ENCODE measurements at regions of chr2 and their contacts with region 1.

Region 1: DNA sequence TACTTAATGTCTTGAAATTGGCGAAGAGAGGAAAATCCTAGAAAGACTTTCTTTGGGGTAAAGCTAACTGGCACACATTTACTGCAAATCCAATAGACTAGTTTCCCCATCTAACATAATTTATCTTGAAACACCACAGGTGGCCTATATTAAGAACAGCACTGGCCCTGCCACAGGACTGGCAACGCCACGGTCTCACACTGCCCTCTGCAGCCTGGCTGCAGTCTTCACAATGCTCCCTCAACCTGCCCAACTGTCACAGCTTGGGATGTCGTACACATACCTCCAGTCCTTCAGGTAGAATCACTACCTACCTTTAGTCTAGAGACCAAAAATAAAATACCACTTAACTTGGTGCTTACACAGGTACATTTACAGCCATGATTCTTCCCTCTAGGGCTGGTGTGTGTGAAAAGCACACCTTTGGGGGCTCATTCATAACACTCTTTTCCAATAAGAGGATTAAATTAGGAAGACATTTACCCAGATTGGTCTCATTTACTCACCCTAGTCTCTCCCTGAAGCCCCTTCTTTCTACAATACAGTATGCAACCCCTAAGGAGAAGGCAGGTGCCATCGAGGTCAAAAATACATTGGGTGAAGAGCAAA is 222.2 kb downstream of the C1D start:
- DNase-seq: peak; percentile 73
- H3K4me3 Mint-ChIP-seq: no peak overlapping the region
- H3K27ac Mint-ChIP-seq: no peak overlapping the region
- H3K4me1 Mint-ChIP-seq: peaks cover 7% of the 10 kb centered on the region
- H3K27me3 Mint-ChIP-seq: no peaks in the 10 kb centered on the region
- CTCF ChIP-seq: peak; percentile 90

Region 2: DNA sequence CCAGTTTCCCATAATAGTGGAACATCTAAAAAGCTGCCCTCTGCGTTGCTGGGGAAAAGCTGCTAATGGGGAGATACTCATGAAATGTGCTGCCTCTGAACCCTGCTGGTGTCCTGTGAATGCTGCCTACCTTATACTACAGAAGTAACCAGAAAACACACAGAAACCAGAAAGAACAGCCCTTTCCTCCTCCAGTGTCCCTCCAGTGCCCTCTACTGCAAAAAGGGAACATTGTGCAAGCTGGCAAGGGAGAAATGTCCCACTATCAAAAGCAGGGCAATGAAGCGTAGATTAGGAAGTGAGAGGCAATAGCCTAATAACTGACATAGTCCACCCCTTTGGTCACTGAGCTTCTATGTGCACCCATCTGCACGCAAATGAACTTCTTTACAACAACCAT is 606.1 kb before region 1 on chr2:
- CTCF ChIA-PET with region 1: interaction called, 6 read pairs
- POLR2A ChIA-PET with region 1: no interaction called
- intact Hi-C with region 1: loop called (anchors 5 kb)
- DNase-seq: peak; percentile 16
- H3K4me3 Mint-ChIP-seq: no peak overlapping the region
- H3K27ac Mint-ChIP-seq: no peak overlapping the region
- H3K4me1 Mint-ChIP-seq: no peaks in the 10 kb centered on the region
- H3K27me3 Mint-ChIP-seq: no peaks in the 10 kb centered on the region
- CTCF ChIP-seq: peak; percentile 38

Region 3: GRCh38 chr2:67322353-67323001 is 518.1 kb before region 1 on chr2:
- CTCF ChIA-PET with region 1: interaction called, 4 read pairs
- POLR2A ChIA-PET with region 1: no interaction called
- intact Hi-C with region 1: loop called (anchors 5 kb)
- DNase-seq: peak; percentile 76
- H3K4me3 Mint-ChIP-seq: no peak overlapping the region
- H3K27ac Mint-ChIP-seq: peak overlapping the region; percentile 57
- H3K4me1 Mint-ChIP-seq: peaks cover 6% of the 10 kb centered on the region
- H3K27me3 Mint-ChIP-seq: no peaks in the 10 kb centered on the region
- CTCF ChIP-seq: peak; percentile 44

Region 4: GRCh38 chr2:67733517-67733916 is 107.0 kb before region 1 on chr2:
- CTCF ChIA-PET with region 1: interaction called, 53 read pairs
- POLR2A ChIA-PET with region 1: no interaction called
- intact Hi-C with region 1: loop called (anchors 1 kb)
- DNase-seq: peak; percentile 45
- H3K4me3 Mint-ChIP-seq: no peak overlapping the region
- H3K27ac Mint-ChIP-seq: no peak overlapping the region
- H3K4me1 Mint-ChIP-seq: no peaks in the 10 kb centered on the region
- H3K27me3 Mint-ChIP-seq: no peaks in the 10 kb centered on the region
- CTCF ChIP-seq: peak; percentile 36

Region 5: GRCh38 chr2:67825476-67825875 is 15.1 kb before region 1 on chr2:
- CTCF ChIA-PET with region 1: interaction called, 22 read pairs
- POLR2A ChIA-PET with region 1: no interaction called
- intact Hi-C with region 1: no loop called
- DNase-seq: peak; percentile 6
- H3K4me3 Mint-ChIP-seq: no peak overlapping the region
- H3K27ac Mint-ChIP-seq: no peak overlapping the region
- H3K4me1 Mint-ChIP-seq: peaks cover 8% of the 10 kb centered on the region
- H3K27me3 Mint-ChIP-seq: no peaks in the 10 kb centered on the region
- CTCF ChIP-seq: no peak

Region 6: GRCh38 chr2:67867735-67868134 is 27.2 kb after region 1 on chr2:
- CTCF ChIA-PET with region 1: no interaction called
- POLR2A ChIA-PET with region 1: no interaction called
- intact Hi-C with region 1: no loop called
- DNase-seq: peak; percentile 30
- H3K4me3 Mint-ChIP-seq: no peak overlapping the region
- H3K27ac Mint-ChIP-seq: no peak overlapping the region
- H3K4me1 Mint-ChIP-seq: peaks cover 15% of the 10 kb centered on the region
- H3K27me3 Mint-ChIP-seq: no peaks in the 10 kb centered on the region
- CTCF ChIP-seq: no peak

Measured in MCF 10A (cell line).